Common myeloid progenitor, CD34-positive (primary cell): ENCODE measurements at regions of chr5 and their contacts with region 1.

Region 1: GRCh38 chr5:159156426-159157238 is 52.7 kb downstream of the RNF145 start:
- DNase-seq: peak; percentile 71 to 86 (median 80)
- H3K4me3 ChIP-seq: no peak overlapping the region
- H3K27ac ChIP-seq: no peak overlapping the region
- H3K4me1 ChIP-seq: peaks cover 9 to 15% (median 12%) of the 10 kb centered on the region in 4 experiments
- H3K27me3 ChIP-seq: peaks cover 0 to 4% (median 2%) of the 10 kb centered on the region in 5 experiments

Region 2: DNA sequence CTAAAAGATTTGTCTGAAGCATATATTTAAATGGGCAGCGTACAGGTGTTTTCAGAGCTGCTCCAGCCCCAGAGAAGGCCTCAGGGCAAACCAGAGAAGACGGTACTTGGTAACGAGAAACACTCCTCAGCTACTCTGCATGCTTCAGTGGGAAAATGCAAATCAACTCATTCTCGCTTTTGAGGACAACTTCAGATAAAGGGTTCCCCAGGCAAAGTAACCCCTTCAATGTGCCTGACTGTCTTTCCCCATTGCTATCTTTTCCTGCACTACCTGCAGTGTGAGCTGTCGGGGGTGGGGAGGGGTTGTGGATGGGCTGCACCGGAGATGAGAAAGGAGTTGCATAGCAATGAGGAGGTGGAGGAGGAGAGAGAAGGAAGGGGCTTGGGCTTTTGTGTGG is 958.0 kb before region 1 on chr5:
- CTCF ChIA-PET with region 1: no interaction called
- POLR2A ChIA-PET with region 1: no interaction called
- DNase-seq: no peak
- H3K4me3 ChIP-seq: no peak overlapping the region
- H3K27ac ChIP-seq: no peak overlapping the region
- H3K4me1 ChIP-seq: peaks cover 0 to 3% (median 0%) of the 10 kb centered on the region in 4 experiments
- H3K27me3 ChIP-seq: peaks cover 0 to 5% (median 0%) of the 10 kb centered on the region in 5 experiments

Region 3: DNA sequence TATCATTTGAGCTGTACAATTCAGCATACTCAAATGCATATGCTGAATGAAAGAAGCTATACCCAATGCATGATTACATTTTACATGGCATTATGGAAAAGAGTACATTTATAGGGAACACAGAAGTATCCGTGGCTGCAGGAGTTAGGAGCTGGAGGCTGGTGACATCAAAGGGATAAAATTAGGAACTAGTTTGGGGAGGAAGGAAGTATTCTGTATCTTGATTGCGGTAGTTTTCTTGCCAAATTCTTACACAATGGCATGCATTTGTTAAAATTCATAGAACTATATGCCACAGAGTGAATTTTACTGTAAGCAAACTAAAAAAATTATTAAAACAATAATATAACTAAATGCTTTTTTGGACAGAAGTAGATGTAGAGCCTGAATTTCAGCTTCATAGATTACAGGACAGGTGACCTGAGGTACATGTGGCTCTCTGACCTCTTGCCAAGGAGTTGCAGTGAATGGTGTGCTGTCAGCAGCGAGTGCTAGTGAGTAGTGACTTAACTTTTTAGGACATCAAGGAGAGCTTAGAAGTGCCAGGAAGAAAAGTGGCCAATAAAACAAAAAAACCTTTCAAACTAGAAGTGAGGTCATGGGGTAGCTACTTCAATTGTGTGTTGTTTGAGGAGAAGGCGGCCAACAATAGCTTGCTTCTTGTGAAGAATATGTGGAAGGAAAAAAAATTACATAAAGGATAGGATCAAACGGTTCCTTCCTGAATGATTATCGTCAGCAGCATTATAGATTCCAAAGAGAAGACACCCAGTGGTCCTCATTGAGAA is 782.8 kb before region 1 on chr5:
- CTCF ChIA-PET with region 1: no interaction called
- POLR2A ChIA-PET with region 1: no interaction called
- DNase-seq: peak; percentile 20 to 54 (median 39)
- H3K4me3 ChIP-seq: no peak overlapping the region
- H3K27ac ChIP-seq: no peak overlapping the region
- H3K4me1 ChIP-seq: peaks cover 6 to 18% (median 12%) of the 10 kb centered on the region in 4 experiments
- H3K27me3 ChIP-seq: peaks cover 0 to 9% (median 2%) of the 10 kb centered on the region in 5 experiments

Region 4: GRCh38 chr5:159139802-159140201 is 16.8 kb before region 1 on chr5:
- CTCF ChIA-PET with region 1: no interaction called
- POLR2A ChIA-PET with region 1: no interaction called
- DNase-seq: no peak
- H3K4me3 ChIP-seq: no peak overlapping the region
- H3K27ac ChIP-seq: no peak overlapping the region
- H3K4me1 ChIP-seq: no peaks in the 10 kb centered on the region
- H3K27me3 ChIP-seq: no peaks in the 10 kb centered on the region

Region 5: DNA sequence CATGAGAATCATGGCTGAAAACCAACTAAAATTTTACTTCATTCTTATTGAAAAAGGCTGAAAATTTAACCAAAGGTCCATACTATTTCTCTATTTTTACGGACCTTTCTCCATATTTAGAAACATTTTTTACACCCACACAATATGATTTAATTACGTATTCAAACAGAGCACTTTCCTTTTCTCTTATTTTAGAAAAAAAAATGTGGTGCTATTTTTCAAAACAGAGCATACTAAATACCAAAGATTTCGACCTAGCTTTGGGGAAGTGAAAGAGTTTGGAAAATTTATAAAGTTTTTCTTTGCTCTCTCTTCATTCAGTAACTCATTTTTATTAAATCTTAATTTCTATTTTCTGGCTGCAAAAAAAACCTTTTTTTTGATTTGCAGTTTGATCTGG is 14.6 kb after region 1 on chr5:
- CTCF ChIA-PET with region 1: interaction called, 14 read pairs
- POLR2A ChIA-PET with region 1: interaction called, 3 read pairs
- DNase-seq: no peak
- H3K4me3 ChIP-seq: no peak overlapping the region
- H3K27ac ChIP-seq: no peak overlapping the region
- H3K4me1 ChIP-seq: peaks cover 0 to 4% (median 0%) of the 10 kb centered on the region in 4 experiments
- H3K27me3 ChIP-seq: no peaks in the 10 kb centered on the region

Region 6: DNA sequence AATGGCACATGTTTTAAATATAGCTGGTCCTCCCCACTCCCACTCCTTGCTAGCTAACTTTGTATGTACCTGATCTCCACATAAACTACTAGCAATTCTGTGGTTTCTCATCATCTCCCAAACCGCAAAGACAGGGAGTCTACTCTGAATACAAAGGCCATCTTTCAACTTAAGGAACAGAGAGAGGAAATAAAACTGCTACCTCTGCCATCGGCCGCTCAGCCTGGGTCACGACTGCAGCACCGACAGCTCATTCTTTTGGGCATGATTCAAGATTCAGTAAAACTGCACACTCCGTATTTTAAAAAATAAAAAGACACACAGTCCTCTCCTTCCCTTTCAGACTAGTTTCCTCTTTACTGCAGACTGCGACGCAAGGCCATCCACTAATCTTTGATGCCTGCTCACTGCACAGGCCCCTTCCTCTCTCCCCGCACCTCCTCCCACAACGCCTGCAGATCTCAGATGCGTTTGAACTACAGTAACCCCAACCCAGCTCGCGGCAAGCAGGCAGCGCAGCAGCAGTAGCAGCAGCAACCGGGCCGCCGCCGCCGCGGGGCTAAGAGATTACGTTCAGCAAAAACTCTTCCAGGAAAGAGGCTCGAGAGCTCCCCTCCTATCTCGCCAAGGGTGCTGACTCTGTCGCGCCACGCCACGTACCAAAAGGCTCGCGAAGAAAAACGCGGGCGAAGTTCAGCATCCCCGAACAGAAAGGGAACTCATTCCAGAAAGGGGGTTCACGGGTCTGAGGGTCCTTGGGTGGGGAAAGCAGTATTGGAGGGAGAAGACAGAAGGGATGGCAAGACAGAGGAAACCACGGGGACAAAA is 51.3 kb after region 1 on chr5:
- CTCF ChIA-PET with region 1: interaction called, 12 read pairs
- POLR2A ChIA-PET with region 1: interaction called, 4 read pairs
- DNase-seq: peak; percentile 91 to 97 (median 94)
- H3K4me3 ChIP-seq: peak overlapping the region; percentile 47 to 94 (median 94)
- H3K27ac ChIP-seq: peak overlapping the region; percentile 48 to 84
- H3K4me1 ChIP-seq: peaks cover 28 to 75% (median 50%) of the 10 kb centered on the region in 4 experiments
- H3K27me3 ChIP-seq: no peaks in the 10 kb centered on the region

Region 7: GRCh38 chr5:159274676-159275075 is 118.0 kb after region 1 on chr5:
- CTCF ChIA-PET with region 1: interaction called, 15 read pairs
- POLR2A ChIA-PET with region 1: no interaction called
- DNase-seq: peak in 1 of 3 donors; percentile 27
- H3K4me3 ChIP-seq: peak overlapping the region in 4 of 7 experiments; percentile 0 to 65 (median 24)
- H3K27ac ChIP-seq: no peak overlapping the region
- H3K4me1 ChIP-seq: peaks cover 0 to 9% (median 4%) of the 10 kb centered on the region in 4 experiments
- H3K27me3 ChIP-seq: no peaks in the 10 kb centered on the region

Region 8: DNA sequence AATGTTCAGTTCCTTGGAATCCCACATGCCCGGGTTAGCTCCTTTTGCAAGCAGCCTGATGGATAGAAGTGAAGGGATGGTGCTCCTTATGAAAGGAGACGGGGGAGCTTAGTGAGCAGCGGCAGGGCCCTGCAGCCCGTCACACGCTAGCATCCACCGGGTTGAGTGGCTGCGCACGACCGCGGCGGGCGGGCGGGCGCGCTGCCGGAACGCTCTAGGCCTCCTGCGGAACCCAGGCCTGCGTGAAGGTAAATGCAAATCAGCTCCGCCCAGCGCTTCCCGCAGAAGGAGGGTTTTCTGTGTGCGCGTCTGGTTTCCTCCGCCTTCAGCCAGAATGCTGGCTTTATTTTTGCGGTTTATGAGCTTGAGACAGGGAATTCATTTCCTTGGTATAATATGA is 153.9 kb after region 1 on chr5:
- CTCF ChIA-PET with region 1: interaction called, 11 read pairs
- POLR2A ChIA-PET with region 1: no interaction called
- DNase-seq: peak in 2 of 3 donors; percentile 67 to 77
- H3K4me3 ChIP-seq: peak overlapping the region in 5 of 7 experiments; percentile 30 to 67 (median 37)
- H3K27ac ChIP-seq: no peak overlapping the region
- H3K4me1 ChIP-seq: peaks cover 2 to 12% (median 8%) of the 10 kb centered on the region in 4 experiments
- H3K27me3 ChIP-seq: peaks cover 0 to 9% (median 1%) of the 10 kb centered on the region in 5 experiments

Region 9: GRCh38 chr5:159316519-159317383 is 160.1 kb after region 1 on chr5:
- CTCF ChIA-PET with region 1: interaction called, 11 read pairs
- POLR2A ChIA-PET with region 1: no interaction called
- DNase-seq: peak; percentile 66 to 79 (median 75)
- H3K4me3 ChIP-seq: no peak overlapping the region
- H3K27ac ChIP-seq: no peak overlapping the region
- H3K4me1 ChIP-seq: no peaks in the 10 kb centered on the region
- H3K27me3 ChIP-seq: peaks cover 0 to 3% (median 0%) of the 10 kb centered on the region in 5 experiments